AG04450 (cell line): ENCODE measurements at regions of chr13 and their contacts with region 1.

Region 1: DNA sequence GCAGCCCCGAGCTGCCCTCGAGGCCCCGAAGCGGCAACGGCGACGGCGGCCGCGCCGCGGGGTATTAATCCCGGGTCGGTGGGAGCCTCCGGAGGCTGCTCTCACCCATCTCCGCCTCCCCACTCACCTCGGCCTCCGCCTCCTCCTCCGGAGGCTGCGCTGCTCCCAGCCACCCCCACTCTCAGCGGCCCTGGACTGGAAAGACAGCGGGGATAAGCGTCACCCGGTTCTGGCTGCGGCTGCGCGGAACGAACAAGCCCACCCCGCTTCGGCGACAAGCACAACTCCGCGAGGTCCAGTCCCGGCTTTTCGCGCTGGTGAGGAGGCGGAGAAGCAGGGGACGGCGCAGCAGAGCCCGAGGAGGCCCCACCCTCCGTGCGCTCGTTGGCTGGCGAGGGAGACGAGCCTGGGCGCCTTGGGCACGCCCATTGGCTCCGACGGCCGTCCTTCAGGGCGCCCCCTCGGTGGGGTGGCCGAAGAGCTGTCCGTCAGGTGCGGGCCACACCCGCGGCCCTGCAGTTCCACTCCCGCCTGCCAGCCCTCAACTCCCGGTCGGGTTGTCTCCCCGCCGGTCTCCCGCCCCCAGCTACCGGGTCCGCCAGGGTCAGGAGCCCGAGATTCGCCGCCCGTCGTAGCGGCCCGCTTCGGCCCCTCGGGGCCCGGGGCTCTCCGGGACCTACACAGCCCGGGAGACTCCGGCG is at the start of gene ZMYM5:
- DNase-seq: peak; percentile 99
- H3K4me3 ChIP-seq: peak within 1 kb of the TSS; percentile 84
- H3K27ac ChIP-seq: peak within 1 kb of the TSS; percentile 94
- H3K27me3 ChIP-seq: no peaks in the 10 kb centered on the region
- CTCF ChIP-seq: no peak
- polyA plus RNA-seq, gene ZMYM5: 9.9 and 15.3 TPM in 2 replicates

Region 2: GRCh38 chr13:19737844-19738557 is 125.5 kb before region 1 on chr13:
- CTCF ChIA-PET with region 1: no interaction called
- POLR2A ChIA-PET with region 1: no interaction called
- DNase-seq: no peak
- H3K4me3 ChIP-seq: no peak overlapping the region
- H3K27ac ChIP-seq: no peak overlapping the region
- H3K27me3 ChIP-seq: no peaks in the 10 kb centered on the region
- CTCF ChIP-seq: no peak

Region 3: GRCh38 chr13:19845758-19846157 is 17.7 kb before region 1 on chr13:
- CTCF ChIA-PET with region 1: interaction called, 4 read pairs
- POLR2A ChIA-PET with region 1: interaction called, 15 read pairs
- DNase-seq: peak; percentile 96
- H3K4me3 ChIP-seq: no peak overlapping the region
- H3K27ac ChIP-seq: peak overlapping the region; percentile 42
- H3K27me3 ChIP-seq: no peaks in the 10 kb centered on the region
- CTCF ChIP-seq: no peak

Region 4: GRCh38 chr13:19967621-19968020 is 104.1 kb after region 1 on chr13:
- CTCF ChIA-PET with region 1: no interaction called
- POLR2A ChIA-PET with region 1: no interaction called
- DNase-seq: no peak
- H3K4me3 ChIP-seq: no peak overlapping the region
- H3K27ac ChIP-seq: no peak overlapping the region
- H3K27me3 ChIP-seq: no peaks in the 10 kb centered on the region
- CTCF ChIP-seq: no peak